ENCODE measurements at regions of chr10 and their contacts with region 1.

Region 1: GRCh38 chr10:86376852-86377796 is 10.5 kb upstream of the GRID1 start:
- DNase-seq: peak; percentile 96
- H3K4me3 ChIP-seq: peak overlapping the region in 4 of 8 donors; percentile 16 to 57 (median 21)
- H3K27ac ChIP-seq: no peak overlapping the region
- H3K4me1 ChIP-seq: peaks cover 4 to 10% (median 8%) of the 10 kb centered on the region in 6 donors
- H3K27me3 ChIP-seq: peaks cover 3 to 76% (median 14%) of the 10 kb centered on the region in 7 donors
- CTCF ChIP-seq: peak; percentile 83 to 100 (median 97)
- POLR2A ChIP-seq: no peak

Region 2: DNA sequence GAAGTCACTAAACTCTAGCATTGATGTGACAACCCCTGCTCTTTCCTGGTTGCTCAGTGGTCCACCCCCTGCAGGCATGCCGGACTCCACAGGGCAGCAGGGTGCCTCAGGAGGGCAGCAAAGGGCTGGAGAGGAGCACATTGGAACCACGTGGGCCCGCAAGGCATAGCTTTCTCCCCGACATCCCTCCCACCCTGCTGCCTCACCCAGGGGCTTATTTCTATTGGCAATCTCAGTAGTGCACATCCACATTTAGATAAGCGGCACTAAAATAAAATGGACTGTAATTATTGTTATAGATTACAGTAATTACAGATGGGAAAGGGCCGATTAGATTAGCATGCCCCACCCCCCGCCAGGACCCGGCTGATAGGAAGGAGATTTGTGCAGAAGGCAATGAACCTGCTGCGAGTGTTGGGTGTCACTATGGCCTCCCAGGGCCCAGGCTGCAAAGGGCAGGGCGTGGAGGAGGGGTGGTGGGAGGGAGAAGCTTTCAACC is 590.7 kb before region 1 on chr10:
- intact Hi-C with region 1: loop called (anchors 10 kb)
- DNase-seq: no peak
- H3K4me3 ChIP-seq: no peak overlapping the region
- H3K27ac ChIP-seq: no peak overlapping the region
- H3K4me1 ChIP-seq: no peaks in the 10 kb centered on the region
- H3K27me3 ChIP-seq: no peaks in the 10 kb centered on the region
- CTCF ChIP-seq: peak in 5 of 11 experiments; percentile 8 to 29 (median 17)
- POLR2A ChIP-seq: no peak